ENCODE measurements at regions of chr5 and their contacts with region 1.

Region 1: GRCh38 chr5:177405805-177406204 is 3.6 kb downstream of the F12 start:
- DNase-seq: no peak
- H3K4me3 ChIP-seq: no peak overlapping the region
- H3K27ac ChIP-seq: no peak overlapping the region
- H3K4me1 ChIP-seq: peaks cover 29 to 40% (median 34%) of the 10 kb centered on the region in 3 donors
- H3K27me3 ChIP-seq: peaks cover 0 to 39% (median 10%) of the 10 kb centered on the region in 4 donors
- CTCF ChIP-seq: no peak
- POLR2A ChIP-seq: no peak

Region 2: GRCh38 chr5:177454397-177455035 is 48.7 kb after region 1 on chr5:
- intact Hi-C with region 1: loop called (anchors 5 kb)
- DNase-seq: peak; percentile 63
- H3K4me3 ChIP-seq: peak overlapping the region; percentile 43 to 76 (median 60)
- H3K27ac ChIP-seq: peak overlapping the region; percentile 68 to 91 (median 80)
- H3K4me1 ChIP-seq: peaks cover 34 to 71% (median 40%) of the 10 kb centered on the region in 3 donors
- H3K27me3 ChIP-seq: peaks cover 0 to 30% (median 0%) of the 10 kb centered on the region in 4 donors
- CTCF ChIP-seq: peak; percentile 96 to 99 (median 98)
- POLR2A ChIP-seq: no peak

Region 3: GRCh38 chr5:177599731-177600507 is 194.1 kb after region 1 on chr5 and contains the start of gene B4GALT7:
- intact Hi-C with region 1: no loop called
- DNase-seq: no peak
- H3K4me3 ChIP-seq: peak within 1 kb of the TSS; percentile 71 to 95 (median 88)
- H3K27ac ChIP-seq: peak within 1 kb of the TSS; percentile 93 to 95 (median 94)
- H3K4me1 ChIP-seq: peaks cover 18 to 46% (median 26%) of the 10 kb centered on the region in 3 donors
- H3K27me3 ChIP-seq: no peaks in the 10 kb centered on the region
- CTCF ChIP-seq: peak in 1 of 6 experiments; percentile 19
- POLR2A ChIP-seq: peak in 3 of 4 donors; percentile 15 to 88 (median 86)
- total RNA-seq, gene B4GALT7: 13.5 to 22.9 (median 15.8) TPM

Region 4: GRCh38 chr5:178086276-178086675 is 680.5 kb after region 1 on chr5:
- intact Hi-C with region 1: no loop called
- DNase-seq: no peak
- H3K4me3 ChIP-seq: no peak overlapping the region
- H3K27ac ChIP-seq: peak overlapping the region in 1 of 4 donors; percentile 61
- H3K4me1 ChIP-seq: peaks cover 0 to 29% (median 4%) of the 10 kb centered on the region in 3 donors
- H3K27me3 ChIP-seq: peaks cover 0 to 28% (median 0%) of the 10 kb centered on the region in 4 donors
- CTCF ChIP-seq: no peak
- POLR2A ChIP-seq: no peak

Measured in esophagus squamous epithelium (tissue), 5 donors.